ENCODE measurements at regions of chr5 and their contacts with region 1.

Region 1: DNA sequence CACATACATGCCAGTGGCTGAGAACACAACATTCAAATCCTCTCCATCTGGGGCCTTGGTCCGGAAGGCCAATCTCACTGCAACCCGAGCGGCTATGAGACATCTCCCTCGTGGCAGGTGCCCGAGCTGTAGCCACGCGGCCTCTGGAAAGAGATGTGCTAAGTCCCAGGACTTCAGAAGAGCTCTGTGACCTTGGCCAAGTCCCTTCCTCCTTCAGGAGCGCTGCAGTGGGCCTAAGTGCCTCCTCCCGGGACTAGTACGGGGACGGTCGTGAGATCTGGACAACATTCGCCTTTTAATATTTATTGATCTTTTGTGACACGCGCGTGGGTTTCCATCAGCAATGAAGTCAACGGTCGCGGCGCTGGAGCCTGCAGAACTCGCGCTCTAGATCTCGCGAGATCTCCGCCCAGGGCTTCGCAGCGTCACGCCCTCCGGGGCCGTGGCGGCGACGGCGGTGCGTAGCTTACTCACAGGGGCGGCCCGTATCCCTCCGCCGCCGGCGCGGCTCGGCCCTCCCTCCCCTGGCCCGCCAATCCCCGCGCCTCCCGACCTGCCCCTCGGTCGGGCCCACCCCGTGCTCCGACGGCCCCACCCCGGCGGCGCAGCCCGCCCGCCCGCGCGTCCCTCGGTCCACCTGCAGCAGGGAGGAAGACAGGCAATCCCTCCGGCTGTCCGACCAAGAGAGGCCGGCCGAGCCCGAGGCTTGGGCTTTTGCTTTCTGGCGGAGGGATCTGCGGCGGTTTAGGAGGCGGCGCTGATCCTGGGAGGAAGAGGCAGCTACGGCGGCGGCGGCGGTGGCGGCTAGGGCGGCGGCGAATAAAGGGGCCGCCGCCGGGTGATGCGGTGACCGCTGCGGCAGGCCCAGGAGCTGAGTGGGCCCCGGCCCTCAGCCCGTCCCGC is at the start of gene UBE2D2:
- DNase-seq: peak; percentile 98 to 99
- ATAC-seq: peak; percentile 95 to 98 (median 97)
- H3K4me3 ChIP-seq: peak within 1 kb of the TSS; percentile 98
- H3K27ac ChIP-seq: peak within 1 kb of the TSS; percentile 98
- H3K4me1 ChIP-seq: peaks cover 37% of the 10 kb centered on the region
- H3K27me3 ChIP-seq: no peaks in the 10 kb centered on the region
- CTCF ChIP-seq: no peak
- total RNA-seq, gene UBE2D2: 156 to 175 (median 164) TPM

Region 2: DNA sequence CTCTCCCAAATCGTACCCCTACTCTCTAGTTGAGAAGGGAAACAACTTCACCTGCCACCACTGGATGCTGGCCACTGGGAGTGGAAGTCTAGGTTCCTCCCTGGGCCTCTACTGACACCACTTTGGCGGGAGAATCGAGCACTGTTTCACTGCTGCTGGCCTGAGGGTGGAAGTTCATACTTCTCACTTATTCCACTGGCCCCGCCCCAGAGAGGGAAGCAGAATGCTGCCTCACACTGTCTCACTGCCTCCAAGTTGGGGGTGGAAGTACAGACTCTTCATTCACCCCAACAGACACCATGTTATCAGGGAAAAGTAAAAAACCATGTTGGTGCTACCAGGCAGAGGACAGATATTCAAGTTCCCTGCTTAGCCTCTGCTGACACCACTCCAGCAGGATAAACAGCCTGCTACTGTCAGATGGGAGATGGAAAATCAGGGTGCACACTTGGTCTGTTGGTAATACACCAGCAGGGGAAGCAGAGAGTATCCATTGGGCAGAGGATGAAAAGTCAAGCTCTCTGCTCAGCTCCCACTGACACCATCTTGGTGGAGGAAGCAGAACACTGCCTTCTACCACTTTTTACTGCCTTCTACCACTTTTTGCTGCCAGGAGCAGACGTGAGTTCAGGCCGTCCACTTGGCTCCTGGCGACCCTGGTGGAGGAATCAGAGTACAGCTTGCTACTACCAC is 522.2 kb before region 1 on chr5:
- intact Hi-C with region 1: no loop called
- DNase-seq: no peak
- ATAC-seq: no peak
- H3K4me3 ChIP-seq: no peak overlapping the region
- H3K27ac ChIP-seq: no peak overlapping the region
- H3K4me1 ChIP-seq: peaks cover 4% of the 10 kb centered on the region
- H3K27me3 ChIP-seq: no peaks in the 10 kb centered on the region
- CTCF ChIP-seq: no peak

Region 3: DNA sequence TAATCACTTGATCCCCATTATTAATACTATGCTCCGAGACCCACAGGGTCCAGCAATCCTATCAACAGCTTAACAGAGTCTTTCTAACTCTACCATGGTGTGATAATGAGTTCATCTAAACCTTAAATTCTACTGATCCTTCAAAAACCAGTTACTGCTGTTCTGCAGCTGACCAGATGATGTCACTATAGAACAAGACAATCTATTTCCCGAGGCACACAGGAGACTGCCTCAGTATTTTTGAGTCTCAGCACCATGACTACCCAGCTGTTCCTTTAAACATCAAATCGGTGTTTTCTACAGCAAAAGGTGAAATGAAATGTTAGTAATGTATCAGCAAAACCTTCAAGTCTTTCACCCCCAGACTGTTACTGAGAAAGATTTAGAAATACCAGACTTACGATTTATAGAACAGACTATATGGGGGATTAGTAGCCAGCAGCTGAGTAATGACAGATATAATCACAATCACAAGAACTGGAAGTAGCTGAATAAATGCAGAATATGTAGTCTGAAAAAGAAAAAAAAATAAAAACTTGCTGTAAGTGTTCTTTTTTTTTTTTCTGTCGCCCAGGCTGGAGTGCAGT is 138.6 kb before region 1 on chr5:
- intact Hi-C with region 1: loop called in 1 of 2 experiments (anchors 5 kb)
- DNase-seq: no peak
- ATAC-seq: peak; percentile 55 to 65 (median 62)
- H3K4me3 ChIP-seq: no peak overlapping the region
- H3K27ac ChIP-seq: no peak overlapping the region
- H3K4me1 ChIP-seq: peaks cover 38% of the 10 kb centered on the region
- H3K27me3 ChIP-seq: no peaks in the 10 kb centered on the region
- CTCF ChIP-seq: peak; percentile 83

Region 4: GRCh38 chr5:139439013-139439903 is 121.7 kb before region 1 on chr5 and contains the start of gene DNAJC18:
- intact Hi-C with region 1: loop called in 1 of 2 experiments (anchors 5 kb)
- DNase-seq: peak; percentile 96 to 97
- ATAC-seq: peak; percentile 98 to 99 (median 98)
- H3K4me3 ChIP-seq: peak within 1 kb of the TSS; percentile 94
- H3K27ac ChIP-seq: peak within 1 kb of the TSS; percentile 100
- H3K4me1 ChIP-seq: peaks cover 12% of the 10 kb centered on the region
- H3K27me3 ChIP-seq: no peaks in the 10 kb centered on the region
- CTCF ChIP-seq: no peak
- total RNA-seq, gene DNAJC18: 9.0 to 10.7 (median 10.2) TPM

Region 5: GRCh38 chr5:139524932-139525585 is 35.9 kb before region 1 on chr5:
- intact Hi-C with region 1: loop called in 1 of 2 experiments (anchors 2 kb)
- DNase-seq: no peak
- ATAC-seq: no peak
- H3K4me3 ChIP-seq: no peak overlapping the region
- H3K27ac ChIP-seq: no peak overlapping the region
- H3K4me1 ChIP-seq: peaks cover 9% of the 10 kb centered on the region
- H3K27me3 ChIP-seq: no peaks in the 10 kb centered on the region
- CTCF ChIP-seq: no peak